ENCODE measurements at regions of chrX and their contacts with region 1.

Region 1: DNA sequence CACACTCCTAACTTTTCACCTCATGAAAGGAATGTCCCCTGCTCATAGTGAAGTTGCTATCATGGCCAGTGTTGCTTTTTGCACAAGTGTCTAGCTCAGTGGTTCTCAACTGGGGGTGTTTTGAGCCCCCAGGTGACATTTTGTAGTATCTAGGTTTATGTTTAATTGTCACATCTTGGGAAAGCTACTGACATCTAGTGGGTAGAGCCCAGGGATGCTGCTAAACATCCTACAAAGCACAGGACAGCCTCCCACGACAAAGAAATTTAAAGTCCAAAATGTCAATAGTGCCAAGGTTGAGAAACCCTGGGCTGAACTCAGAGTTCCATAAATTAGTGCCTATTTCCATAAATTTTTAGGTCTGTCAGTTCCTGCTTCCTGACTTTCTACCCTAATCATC is 70.7 kb upstream of the HCCS start:
- DNase-seq: no peak
- H3K4me3 ChIP-seq: no peak overlapping the region
- H3K4me3 Mint-ChIP-seq: no peak overlapping the region
- H3K27ac Mint-ChIP-seq: peak overlapping the region; percentile 35
- H3K4me1 ChIP-seq: no peaks in the 10 kb centered on the region; the same call in 1 of the 2 replicates
- H3K4me1 Mint-ChIP-seq: no peaks in the 10 kb centered on the region
- H3K27me3 ChIP-seq: no peaks in the 10 kb centered on the region
- H3K27me3 Mint-ChIP-seq: no peaks in the 10 kb centered on the region
- CTCF ChIP-seq: peak in 1 of 2 experiments; percentile 44

Region 2: DNA sequence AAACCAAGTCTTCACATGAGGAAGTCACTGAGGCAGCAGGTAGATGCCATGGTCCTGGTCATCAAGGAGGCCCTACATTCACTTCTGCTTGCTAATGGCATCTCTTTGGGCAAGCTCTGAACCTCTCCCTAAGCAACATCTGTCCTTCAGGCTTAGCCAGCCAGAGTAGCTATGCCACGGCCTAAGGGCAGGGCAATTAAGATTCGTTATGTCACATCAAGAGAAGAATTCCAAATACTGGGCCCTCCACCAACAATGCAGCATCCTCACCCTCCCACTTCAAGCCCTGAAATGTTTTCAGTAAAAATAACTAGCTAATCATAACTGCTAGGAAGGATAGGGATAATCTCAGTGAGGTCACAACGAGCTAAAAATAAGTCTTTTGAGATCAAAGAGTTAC is 50.0 kb before region 1 on chrX:
- CTCF ChIA-PET with region 1: no interaction called
- POLR2A ChIA-PET with region 1: no interaction called
- intact Hi-C with region 1: loop called (anchors 10 kb)
- DNase-seq: no peak
- H3K4me3 ChIP-seq: no peak overlapping the region
- H3K4me3 Mint-ChIP-seq: no peak overlapping the region
- H3K27ac Mint-ChIP-seq: no peak overlapping the region
- H3K4me1 ChIP-seq: peaks cover 59% of the 10 kb centered on the region
- H3K4me1 Mint-ChIP-seq: peaks cover 28% of the 10 kb centered on the region
- H3K27me3 ChIP-seq: no peaks in the 10 kb centered on the region
- H3K27me3 Mint-ChIP-seq: no peaks in the 10 kb centered on the region
- CTCF ChIP-seq: no peak

Region 3: DNA sequence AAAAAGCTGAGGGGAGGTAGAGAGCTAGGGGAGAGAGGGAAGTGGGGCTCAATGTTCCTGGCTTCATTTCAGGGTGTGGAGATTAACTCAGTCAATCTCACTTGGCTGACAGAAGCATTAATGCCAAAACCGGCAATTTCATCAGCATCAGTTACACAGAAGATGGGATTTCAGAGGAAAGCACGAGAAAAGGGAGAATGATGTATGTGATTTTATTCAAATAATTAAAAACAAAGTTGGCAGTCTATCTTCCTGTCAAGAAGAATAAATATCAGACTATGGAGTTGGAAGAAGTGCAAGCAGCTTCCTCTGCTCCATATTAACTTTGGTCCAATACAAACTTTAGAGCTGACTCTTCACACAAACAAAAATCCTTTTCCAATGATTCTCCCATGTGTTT is 41.1 kb after region 1 on chrX:
- CTCF ChIA-PET with region 1: no interaction called
- POLR2A ChIA-PET with region 1: no interaction called
- intact Hi-C with region 1: no loop called
- DNase-seq: no peak
- H3K4me3 ChIP-seq: no peak overlapping the region
- H3K4me3 Mint-ChIP-seq: no peak overlapping the region
- H3K27ac Mint-ChIP-seq: no peak overlapping the region
- H3K4me1 ChIP-seq: no peaks in the 10 kb centered on the region
- H3K4me1 Mint-ChIP-seq: no peaks in the 10 kb centered on the region
- H3K27me3 ChIP-seq: no peaks in the 10 kb centered on the region
- H3K27me3 Mint-ChIP-seq: no peaks in the 10 kb centered on the region
- CTCF ChIP-seq: no peak

Measured in Caco-2 (cell line).